Activated T-helper 2 cell treated with anti-CD3 and anti-CD28 coated beads, Interferon-gamma antibody, Interleukin-2, Interleukin-4, amounts not matched to agents 10 μg/mL and 5 μg/mL and 100 μg/mL, durations not matched to agents 14 hours and 24 hours and 36 hours (primary cell): ENCODE measurements at regions of chr17 and their contacts with region 1.

Region 1: GRCh38 chr17:20281860-20282259 is 185.5 kb downstream of the LGALS9B start:
- DNase-seq: no peak
- H3K4me3 Mint-ChIP-seq: no peak overlapping the region
- H3K27ac Mint-ChIP-seq: peak overlapping the region; percentile 50
- H3K4me1 Mint-ChIP-seq: peaks cover 44% of the 10 kb centered on the region
- H3K27me3 Mint-ChIP-seq: no peaks in the 10 kb centered on the region

Region 2: GRCh38 chr17:19940722-19941464 is 341.0 kb before region 1 on chr17:
- intact Hi-C with region 1: no loop called
- DNase-seq: no peak
- H3K4me3 Mint-ChIP-seq: no peak overlapping the region
- H3K27ac Mint-ChIP-seq: peak overlapping the region; percentile 38
- H3K4me1 Mint-ChIP-seq: peaks cover 10% of the 10 kb centered on the region
- H3K27me3 Mint-ChIP-seq: no peaks in the 10 kb centered on the region

Region 3: DNA sequence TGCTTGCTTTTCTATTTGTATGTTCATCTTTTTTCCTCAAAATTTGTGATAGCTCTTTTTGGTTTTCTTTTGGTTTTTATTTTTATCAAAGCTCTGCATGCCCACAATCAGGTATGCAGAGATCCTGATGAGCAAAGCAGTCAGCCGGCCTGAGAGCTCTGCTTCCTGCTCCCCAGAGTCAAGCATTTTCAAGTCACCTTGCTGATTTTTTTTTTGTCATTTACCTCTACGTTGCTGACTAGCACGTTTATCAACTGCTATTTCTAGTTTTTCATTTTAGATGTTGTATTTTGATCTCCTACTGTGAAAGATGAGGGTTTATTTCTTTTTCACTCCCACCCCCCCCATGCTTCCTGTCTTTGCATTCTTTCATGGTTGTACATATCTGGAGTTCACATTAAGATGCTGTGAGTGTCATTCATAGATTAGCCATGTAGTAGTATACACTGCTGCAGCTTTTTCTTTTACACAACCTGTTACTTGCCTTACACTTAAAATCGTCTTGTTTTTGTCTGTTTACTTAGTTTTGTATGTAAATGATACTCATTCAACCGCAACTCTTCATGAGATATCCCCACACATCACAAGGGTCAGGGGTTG is 10.7 kb before region 1 on chr17:
- intact Hi-C with region 1: loop called (anchors 1 kb)
- DNase-seq: no peak
- H3K4me3 Mint-ChIP-seq: peak overlapping the region; percentile 41
- H3K27ac Mint-ChIP-seq: peak overlapping the region; percentile 77
- H3K4me1 Mint-ChIP-seq: peaks cover 50% of the 10 kb centered on the region
- H3K27me3 Mint-ChIP-seq: no peaks in the 10 kb centered on the region